Sciatic nerve (tissue), 2 donors: ENCODE measurements at regions of chr9 and their contacts with region 1.

Region 1: GRCh38 chr9:72579880-72580570 is 58.6 kb downstream of the TMC1 start:
- DNase-seq: no peak
- ATAC-seq: no peak

Region 2: DNA sequence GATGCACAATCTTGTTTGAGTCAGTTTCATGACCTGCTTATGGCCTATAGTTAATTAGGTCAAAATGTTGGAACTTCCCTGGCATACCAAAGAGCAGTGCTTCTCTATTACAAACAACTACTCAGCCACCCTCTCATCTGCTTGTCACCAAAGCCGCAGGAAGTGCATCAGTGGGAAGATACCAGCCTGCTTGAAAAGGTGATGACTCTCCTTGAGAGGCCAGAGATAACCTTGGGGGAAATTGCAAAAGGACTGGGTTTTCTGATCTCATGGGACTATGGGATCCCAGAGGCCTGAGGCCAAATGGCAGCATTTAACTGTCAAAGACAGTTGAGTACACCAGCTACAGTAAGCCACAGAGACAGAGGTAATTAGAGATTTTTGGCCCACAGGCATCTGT is 589.6 kb before region 1 on chr9:
- intact Hi-C with region 1: no loop called
- DNase-seq: no peak
- ATAC-seq: no peak

Region 3: GRCh38 chr9:72763022-72763421 is 183.0 kb after region 1 on chr9:
- intact Hi-C with region 1: no loop called
- DNase-seq: no peak
- ATAC-seq: no peak

Region 4: GRCh38 chr9:73824671-73825070 is 1244.6 kb after region 1 on chr9:
- intact Hi-C with region 1: loop called (anchors 5 kb)
- DNase-seq: no peak
- ATAC-seq: no peak